A673 (cell line): ENCODE measurements at regions of chr2 and their contacts with region 1.

Region 1: GRCh38 chr2:169895294-169895985 is 68.2 kb downstream of the UBR3 start:
- DNase-seq: no peak
- H3K4me3 ChIP-seq: no peak overlapping the region
- H3K27ac ChIP-seq: no peak overlapping the region
- H3K4me1 ChIP-seq: no peaks in the 10 kb centered on the region
- H3K27me3 ChIP-seq: no peaks in the 10 kb centered on the region
- CTCF ChIP-seq: no peak

Region 2: DNA sequence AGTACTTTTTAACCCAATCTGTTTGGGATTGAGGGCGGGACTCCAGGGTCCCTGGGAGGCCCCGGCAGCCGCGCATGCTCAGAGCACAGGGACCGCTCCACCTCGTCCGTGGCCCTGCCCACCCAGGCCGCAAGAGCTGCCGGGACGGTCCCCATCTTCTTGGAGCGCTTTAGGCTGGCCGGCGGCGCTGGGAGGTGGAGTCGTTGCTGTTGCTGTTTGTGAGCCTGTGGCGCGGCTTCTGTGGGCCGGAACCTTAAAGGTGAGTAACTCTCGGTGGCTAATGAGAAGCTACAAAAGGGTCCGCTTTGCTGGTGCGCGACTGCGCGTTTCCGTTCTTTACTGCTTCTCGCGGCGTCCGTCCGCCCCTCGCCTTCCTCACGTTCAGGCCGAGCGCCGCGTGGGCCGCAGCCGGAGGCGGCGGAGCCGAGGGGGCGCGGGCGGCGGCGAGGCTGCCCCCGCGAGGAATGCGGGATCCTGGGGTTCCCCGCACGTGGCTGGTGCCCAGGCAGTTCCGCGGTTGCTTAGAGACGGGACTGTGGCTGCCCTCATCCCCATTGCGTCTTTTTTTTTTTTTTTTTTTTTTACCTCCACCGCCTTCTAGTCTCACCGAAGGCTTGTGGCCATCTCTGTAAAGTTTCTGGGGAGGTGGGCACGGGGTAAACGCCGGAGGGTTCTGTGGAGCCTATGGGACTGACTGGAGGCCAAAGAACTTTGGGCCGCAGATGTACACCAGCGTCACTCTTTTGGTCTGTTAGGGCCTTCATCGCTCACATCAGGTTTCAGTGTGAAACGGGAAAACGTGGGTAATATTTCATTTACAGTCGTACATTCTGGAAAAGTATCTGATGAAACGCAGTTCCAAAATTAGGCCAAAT is 96.5 kb before region 1 on chr2 and contains the start of gene SSB:
- CTCF ChIA-PET with region 1: no interaction called
- POLR2A ChIA-PET with region 1: interaction called, 10 read pairs
- intact Hi-C with region 1: no loop called
- DNase-seq: peak; percentile 97
- H3K4me3 ChIP-seq: peak within 1 kb of the TSS; percentile 70
- H3K27ac ChIP-seq: peak within 1 kb of the TSS; percentile 77
- H3K4me1 ChIP-seq: no peaks in the 10 kb centered on the region
- H3K27me3 ChIP-seq: no peaks in the 10 kb centered on the region
- CTCF ChIP-seq: no peak
- total RNA-seq, gene SSB: 219 and 231 TPM in 2 replicates